Right ventricle myocardium inferior (tissue), 1 donor: ENCODE measurements at regions of chr5 and their contacts with region 1.

Region 1: GRCh38 chr5:140690941-140691924 is at the starts of genes HARS1 and HARS2:
- DNase-seq: peak; percentile 93
- ATAC-seq: peak; percentile 98
- total RNA-seq, gene HARS1: 35.9 TPM
- total RNA-seq, gene HARS2: 24.4 TPM

Region 2: DNA sequence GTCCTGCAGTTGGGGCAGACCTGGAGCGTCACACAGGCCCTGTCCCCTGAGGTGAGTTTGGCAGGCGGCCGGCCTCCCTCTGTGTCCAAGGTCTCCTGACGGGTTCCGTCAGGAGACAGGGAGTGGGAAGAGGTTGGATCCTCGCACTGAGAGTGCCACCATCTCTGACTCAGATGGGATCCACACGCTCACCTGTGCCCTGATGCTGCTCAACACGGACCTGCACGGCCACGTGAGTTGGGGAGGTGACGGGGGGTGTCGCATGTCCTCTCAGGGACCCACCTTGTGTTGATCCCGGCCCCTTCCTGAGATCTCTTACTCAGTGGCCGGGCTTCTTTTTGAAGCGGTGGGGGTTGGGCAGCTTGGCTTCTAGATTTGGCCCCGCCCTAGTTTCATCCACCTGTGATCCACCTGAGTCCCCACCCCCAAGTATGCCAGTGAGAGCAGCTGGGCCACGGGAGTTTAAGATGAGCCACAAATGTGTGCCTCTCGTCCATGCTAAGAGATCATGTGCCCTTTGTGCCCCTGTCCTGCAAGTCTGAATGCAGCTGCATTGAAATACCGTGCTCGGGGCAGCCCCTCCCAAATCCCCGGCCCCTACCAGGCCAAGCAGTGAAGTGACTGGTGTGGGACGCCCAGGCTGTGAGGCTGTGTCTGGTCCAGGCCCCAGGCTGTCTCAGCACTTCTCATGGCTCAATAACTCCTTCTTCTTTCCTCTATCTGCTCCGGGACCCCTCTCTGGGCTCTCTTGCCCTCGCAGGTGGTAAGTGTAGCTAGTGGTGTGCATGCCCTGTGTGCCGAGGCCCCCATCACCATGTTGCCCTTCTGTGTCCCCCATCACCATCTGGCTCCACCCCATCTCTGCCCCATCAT is 868.4 kb before region 1 on chr5:
- intact Hi-C with region 1: no loop called
- DNase-seq: no peak
- ATAC-seq: no peak

Region 3: GRCh38 chr5:140042643-140043500 is 648.4 kb before region 1 on chr5 and contains the start of gene NRG2:
- intact Hi-C with region 1: no loop called
- DNase-seq: peak; percentile 84
- ATAC-seq: peak; percentile 92
- total RNA-seq, gene NRG2: 1.9 TPM

Region 4: DNA sequence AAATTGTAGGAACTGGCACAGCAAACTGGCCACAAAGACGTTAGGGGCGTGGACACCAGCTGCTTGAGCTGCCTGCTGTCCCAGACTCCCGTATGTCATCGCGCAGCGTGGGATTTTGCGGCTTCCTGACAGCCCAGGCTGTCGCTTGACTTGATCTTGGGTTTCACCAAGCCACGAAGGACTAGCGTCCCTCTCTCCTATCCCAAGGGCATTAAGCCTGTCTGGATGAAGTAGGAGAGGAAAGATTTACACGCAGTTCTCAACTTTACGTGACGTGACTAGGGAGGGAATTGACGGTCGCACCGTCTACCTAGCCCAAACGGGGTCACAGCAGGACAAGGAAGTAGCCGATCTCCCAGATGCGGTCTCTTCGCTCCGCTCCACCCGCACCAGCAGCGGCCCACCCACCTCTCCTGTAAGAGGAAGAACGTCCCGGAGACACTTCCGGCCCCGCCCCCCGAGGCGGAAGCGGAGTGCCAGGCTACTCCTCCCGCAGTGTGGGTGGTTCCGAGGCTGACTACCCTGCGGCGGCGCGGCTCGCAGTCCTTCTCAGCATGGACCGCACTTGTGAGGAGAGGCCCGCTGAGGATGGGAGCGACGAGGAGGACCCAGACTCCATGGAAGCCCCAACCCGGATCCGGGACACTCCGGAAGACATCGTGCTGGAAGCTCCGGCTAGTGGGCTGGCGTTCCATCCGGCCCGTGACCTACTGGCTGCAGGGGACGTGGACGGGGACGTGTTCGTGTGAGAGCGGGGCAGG is 26.7 kb before region 1 on chr5 and contains the start of gene WDR55:
- intact Hi-C with region 1: loop called (anchors 1 kb)
- DNase-seq: peak; percentile 99
- ATAC-seq: peak; percentile 98
- total RNA-seq, gene WDR55: 11.2 TPM

Region 5: DNA sequence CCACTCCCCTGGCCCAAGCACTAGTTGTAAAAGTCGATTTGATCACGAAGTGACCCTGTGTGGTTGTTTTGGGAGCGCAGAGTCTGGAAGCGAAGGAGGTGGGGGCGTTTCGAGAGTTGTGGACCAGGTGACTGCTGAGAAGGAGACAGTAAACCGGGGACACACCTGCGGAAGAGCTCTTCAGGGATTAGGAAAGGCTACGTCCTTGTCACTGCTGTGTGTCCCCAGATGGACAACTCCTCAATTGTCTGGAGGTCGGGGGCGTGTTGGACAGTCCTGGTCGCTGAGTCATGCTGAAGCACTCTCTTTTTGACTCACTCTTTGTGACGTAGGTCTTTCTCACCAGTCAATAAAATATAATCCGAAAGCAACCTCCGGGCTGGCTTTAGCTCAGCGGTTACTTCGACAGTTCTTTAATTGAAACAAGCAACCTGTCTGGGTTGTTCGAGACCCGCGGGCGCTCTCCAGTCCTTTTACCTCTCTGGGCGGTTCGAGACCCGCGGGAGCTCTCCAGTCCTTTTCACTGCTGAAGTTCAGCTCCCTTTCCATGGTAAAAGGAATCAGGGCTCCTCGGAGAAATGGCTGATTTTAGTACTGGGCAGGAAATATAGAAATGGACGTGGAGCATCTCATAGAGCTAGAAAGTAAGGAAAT is 19.8 kb after region 1 on chr5:
- intact Hi-C with region 1: no loop called
- DNase-seq: peak; percentile 90
- ATAC-seq: peak; percentile 93